ENCODE measurements at regions of chr2 and their contacts with region 1.

Region 1: DNA sequence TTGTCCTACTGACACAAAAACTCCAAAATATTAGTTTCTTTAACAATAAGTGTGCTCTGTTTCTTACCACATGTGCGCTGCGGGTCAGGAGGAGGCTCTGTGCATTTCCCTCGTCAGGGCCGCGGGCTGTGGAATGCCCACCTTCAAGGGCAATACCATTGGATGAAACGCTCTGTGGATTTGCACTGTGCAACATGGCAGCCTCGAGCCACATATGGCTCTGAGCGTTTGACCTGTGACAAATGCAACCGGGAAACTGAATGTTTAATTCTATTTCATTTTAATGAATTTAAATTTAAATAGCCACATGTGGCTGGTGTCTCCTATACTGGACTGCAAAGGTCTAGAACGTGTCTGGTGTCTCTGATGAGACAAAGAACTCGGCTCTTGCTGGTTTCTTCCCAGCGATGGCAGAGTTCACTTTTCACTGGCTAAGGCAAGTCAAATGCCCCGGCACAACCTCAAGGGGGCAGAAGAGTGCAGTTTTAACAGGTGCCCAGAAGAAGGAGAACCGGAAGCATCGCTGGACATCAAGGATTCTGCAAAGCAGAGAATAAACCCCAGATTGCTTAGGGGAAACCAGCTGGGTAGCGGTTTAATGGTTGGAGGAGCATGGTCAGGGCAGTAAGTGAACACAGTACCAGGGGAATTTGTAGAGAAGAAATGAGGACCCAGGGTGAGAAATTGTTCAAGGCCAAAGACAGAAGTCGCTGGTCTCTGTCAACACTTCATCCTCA is 37.0 kb upstream of the TMEM18 start:
- DNase-seq: peak; percentile 83
- H3K4me3 ChIP-seq: no peak overlapping the region; a peak in 1 of 4 replicates
- H3K27ac ChIP-seq: no peak overlapping the region
- H3K4me1 ChIP-seq: peaks cover 0 to 6% of the 10 kb centered on the region in 2 experiments; a peak in 1 of 4 replicates
- H3K27me3 ChIP-seq: no peaks in the 10 kb centered on the region; the same call in 1 of the 2 replicates
- CTCF ChIP-seq: peak; percentile 93
- EP300 ChIP-seq: no peak
- RAD21 ChIP-seq: peak; percentile 93

Region 2: DNA sequence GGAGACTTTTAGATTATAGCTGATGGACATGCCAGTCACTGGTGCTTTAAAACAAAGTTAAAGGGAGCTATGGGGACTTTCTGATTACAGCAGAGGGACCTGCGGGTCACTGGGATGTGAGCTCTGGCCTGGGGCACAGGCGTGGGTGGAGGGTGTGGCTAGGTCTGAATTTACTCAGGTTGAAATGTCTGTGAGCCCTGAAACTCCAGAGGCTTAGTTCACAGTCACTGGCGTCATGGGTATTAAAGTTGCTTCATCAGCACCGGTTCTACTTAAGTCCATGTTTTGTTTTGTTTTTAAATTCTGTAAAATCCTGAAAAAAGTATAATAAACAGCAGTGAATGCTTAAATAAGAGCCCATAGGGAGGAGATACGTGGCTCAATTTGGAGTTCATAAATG is 12.0 kb after region 1 on chr2:
- CTCF ChIA-PET with region 1: interaction called, 44 read pairs
- POLR2A ChIA-PET with region 1: no interaction called
- DNase-seq: no peak
- H3K4me3 ChIP-seq: no peak overlapping the region
- H3K27ac ChIP-seq: no peak overlapping the region
- H3K4me1 ChIP-seq: peaks cover 0 to 8% of the 10 kb centered on the region in 2 experiments; a peak in 2 of 4 replicates
- H3K27me3 ChIP-seq: no peaks in the 10 kb centered on the region; the same call in 1 of the 2 replicates
- CTCF ChIP-seq: no peak
- EP300 ChIP-seq: no peak
- RAD21 ChIP-seq: no peak

Region 3: GRCh38 chr2:741195-741496 is 27.0 kb after region 1 on chr2:
- CTCF ChIA-PET with region 1: interaction called, 32 read pairs
- POLR2A ChIA-PET with region 1: interaction called, 3 read pairs
- DNase-seq: no peak
- H3K4me3 ChIP-seq: peak overlapping the region; percentile 75 to 76
- H3K27ac ChIP-seq: peak overlapping the region; percentile 56 to 86; a peak in 3 of 4 replicates
- H3K4me1 ChIP-seq: peaks cover 9 to 27% of the 10 kb centered on the region in 2 experiments; a peak in 3 of 4 replicates
- H3K27me3 ChIP-seq: no peaks in the 10 kb centered on the region
- CTCF ChIP-seq: no peak
- EP300 ChIP-seq: no peak
- RAD21 ChIP-seq: no peak

Region 4: GRCh38 chr2:903229-903900 is 189.2 kb after region 1 on chr2:
- CTCF ChIA-PET with region 1: interaction called, 32 read pairs
- POLR2A ChIA-PET with region 1: no interaction called
- DNase-seq: no peak
- H3K4me3 ChIP-seq: no peak overlapping the region
- H3K27ac ChIP-seq: no peak overlapping the region
- H3K4me1 ChIP-seq: no peaks in the 10 kb centered on the region; a peak in 1 of 4 replicates
- H3K27me3 ChIP-seq: no peaks in the 10 kb centered on the region
- CTCF ChIP-seq: no peak
- EP300 ChIP-seq: no peak
- RAD21 ChIP-seq: peak; percentile 67

Region 5: DNA sequence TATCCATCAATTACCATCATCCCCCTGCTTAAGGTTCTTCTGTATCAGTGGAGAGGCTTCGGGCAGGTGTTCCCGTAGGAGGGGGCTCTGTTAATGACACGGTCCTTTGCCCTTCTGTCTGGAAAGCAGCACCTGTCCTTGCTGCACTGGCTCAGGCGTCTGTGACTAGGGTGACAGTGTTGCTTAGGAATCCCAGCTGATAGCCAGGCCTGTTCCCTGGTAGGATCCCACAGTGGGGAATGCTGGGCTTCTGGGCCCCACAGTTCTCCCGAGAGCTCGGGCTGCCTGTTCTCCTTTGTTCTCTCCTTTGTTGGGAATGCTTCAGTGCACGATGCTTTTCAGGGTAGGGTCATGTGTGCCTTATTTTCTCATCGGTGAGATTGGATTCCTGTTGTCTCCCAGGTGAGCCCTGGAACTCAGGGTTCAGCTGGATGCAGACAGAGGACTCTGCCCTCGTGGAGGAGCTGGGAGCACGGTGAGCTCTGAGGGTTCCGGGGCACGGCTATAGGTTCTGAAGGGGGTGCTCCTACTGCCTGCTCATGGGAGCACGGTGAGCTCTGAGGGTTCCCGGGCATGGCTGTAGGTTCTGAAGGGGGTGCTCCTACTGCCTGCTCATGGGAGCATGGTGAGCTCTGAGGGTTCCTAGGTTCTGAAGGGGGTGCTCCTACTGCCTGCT is 246.0 kb after region 1 on chr2:
- CTCF ChIA-PET with region 1: interaction called, 22 read pairs
- POLR2A ChIA-PET with region 1: no interaction called
- DNase-seq: no peak
- H3K4me3 ChIP-seq: no peak overlapping the region
- H3K27ac ChIP-seq: no peak overlapping the region
- H3K4me1 ChIP-seq: peaks cover 0 to 2% of the 10 kb centered on the region in 2 experiments; a peak in 1 of 4 replicates
- H3K27me3 ChIP-seq: no peaks in the 10 kb centered on the region
- CTCF ChIP-seq: no peak
- EP300 ChIP-seq: no peak
- RAD21 ChIP-seq: no peak